ENCODE measurements at regions of chr3 and their contacts with region 1.

Region 1: GRCh38 chr3:63228087-63229023 is 49.8 kb upstream of the SYNPR start:
- DNase-seq: peak in 3 of 6 donors; percentile 14 to 35 (median 22)
- ATAC-seq: peak; percentile 86 to 96 (median 91)
- H3K4me3 ChIP-seq: no peak overlapping the region
- H3K27ac ChIP-seq: no peak overlapping the region
- H3K4me1 ChIP-seq: no peaks in the 10 kb centered on the region
- H3K27me3 ChIP-seq: no peaks in the 10 kb centered on the region
- CTCF ChIP-seq: peak; percentile 23 to 51 (median 36)

Region 2: DNA sequence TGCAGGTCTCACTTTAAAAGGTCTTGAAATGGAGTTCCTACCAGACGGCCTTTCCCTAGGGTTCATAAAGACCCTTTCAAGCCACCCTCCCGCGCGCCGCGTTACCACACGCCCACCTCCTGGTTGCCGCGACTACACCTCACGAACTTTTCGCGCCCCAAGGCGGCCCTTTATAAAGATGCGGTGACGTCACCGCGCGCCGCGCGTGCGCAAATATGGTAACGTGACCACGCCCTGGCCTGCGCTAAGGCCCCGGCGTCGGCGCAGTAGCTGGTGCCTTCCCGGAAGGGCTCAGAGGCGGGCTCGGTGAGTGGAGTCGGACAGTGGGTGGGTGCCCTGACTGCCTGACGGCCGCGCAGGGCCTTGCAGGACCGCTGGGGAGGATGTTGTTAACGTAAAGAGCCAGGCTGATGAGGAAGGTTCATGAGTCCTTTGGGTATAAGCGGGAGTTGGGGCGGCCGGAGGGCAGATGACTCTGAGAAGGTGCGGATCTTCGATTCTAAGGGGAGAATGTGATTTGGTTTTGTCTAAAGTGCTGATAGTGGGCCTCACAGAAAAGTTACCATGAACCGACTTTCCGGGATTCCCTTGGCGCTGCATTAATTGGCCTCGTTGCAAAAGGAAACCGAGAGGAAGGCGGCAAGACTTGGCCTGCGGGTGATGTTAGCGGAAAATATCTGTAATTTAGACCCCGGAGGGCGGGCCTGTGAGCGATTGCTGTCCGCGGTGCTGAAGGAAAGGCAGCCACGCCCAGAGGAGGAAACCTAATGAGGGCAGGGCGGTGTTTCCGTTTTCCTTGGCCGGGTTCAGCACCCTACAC is 909.4 kb before region 1 on chr3:
- intact Hi-C with region 1: no loop called
- DNase-seq: peak; percentile 70 to 94 (median 88)
- ATAC-seq: peak; percentile 97 to 100 (median 100)
- H3K4me3 ChIP-seq: peak overlapping the region; percentile 34 to 63 (median 42)
- H3K27ac ChIP-seq: peak overlapping the region; percentile 4 to 84 (median 42)
- H3K4me1 ChIP-seq: peaks cover 0 to 6% (median 4%) of the 10 kb centered on the region in 3 donors
- H3K27me3 ChIP-seq: no peaks in the 10 kb centered on the region
- CTCF ChIP-seq: no peak

Region 3: DNA sequence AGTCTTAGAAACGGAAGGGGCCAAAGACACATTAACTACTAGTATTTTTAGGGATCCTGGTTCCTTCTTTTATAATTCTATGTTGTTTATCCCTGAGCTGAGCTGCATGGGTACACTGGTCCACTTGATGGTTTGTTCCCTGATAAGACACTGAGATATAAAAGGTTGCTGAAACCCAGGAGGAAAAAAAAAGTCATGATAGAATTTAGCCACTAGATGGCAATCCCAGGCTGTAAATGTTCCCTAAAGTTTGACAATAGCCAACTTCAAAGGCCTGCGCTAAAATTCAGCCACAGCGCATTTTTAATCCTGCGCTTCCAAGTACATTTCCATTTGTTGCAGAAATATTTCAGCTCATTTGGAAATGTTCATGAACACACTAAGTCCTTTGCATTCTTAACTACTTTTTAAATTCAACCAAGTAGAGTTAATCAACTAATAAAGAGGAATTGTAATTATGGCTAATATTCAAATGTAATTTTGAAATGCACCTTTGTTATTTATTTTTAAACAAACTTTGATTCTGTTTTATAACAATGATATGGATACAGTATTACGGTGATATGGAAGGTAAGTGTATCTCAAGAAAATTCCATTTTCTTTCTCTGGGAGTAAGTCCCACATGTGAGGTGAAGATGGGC is 605.7 kb before region 1 on chr3:
- intact Hi-C with region 1: loop called in 1 of 3 experiments (anchors 10 kb)
- DNase-seq: peak in 1 of 6 donors; percentile 18
- ATAC-seq: peak in 3 of 4 donors; percentile 74 to 89 (median 84)
- H3K4me3 ChIP-seq: no peak overlapping the region
- H3K27ac ChIP-seq: no peak overlapping the region
- H3K4me1 ChIP-seq: no peaks in the 10 kb centered on the region
- H3K27me3 ChIP-seq: no peaks in the 10 kb centered on the region
- CTCF ChIP-seq: peak; percentile 32 to 57 (median 50)

Region 4: GRCh38 chr3:62665598-62666437 is 562.5 kb before region 1 on chr3:
- intact Hi-C with region 1: loop called in 1 of 3 experiments (anchors 10 kb)
- DNase-seq: peak; percentile 36 to 85 (median 62)
- ATAC-seq: peak; percentile 63 to 97 (median 92)
- H3K4me3 ChIP-seq: no peak overlapping the region
- H3K27ac ChIP-seq: no peak overlapping the region
- H3K4me1 ChIP-seq: no peaks in the 10 kb centered on the region
- H3K27me3 ChIP-seq: no peaks in the 10 kb centered on the region
- CTCF ChIP-seq: peak; percentile 14 to 57 (median 44)